Activated B cell treated with CpG ODN at 0.5 μM for 24 hours (primary cell): ENCODE measurements at regions of chr9 and their contacts with region 1.

Region 1: GRCh38 chr9:19102631-19103345 is at the start of gene HAUS6:
- DNase-seq: peak; percentile 86
- ATAC-seq: peak; percentile 94
- H3K4me3 Mint-ChIP-seq: peak within 1 kb of the TSS; percentile 98
- H3K27ac Mint-ChIP-seq: peak within 1 kb of the TSS; percentile 93
- H3K4me1 Mint-ChIP-seq: peaks cover 17% of the 10 kb centered on the region
- H3K27me3 Mint-ChIP-seq: no peaks in the 10 kb centered on the region
- CTCF ChIP-seq: no peak
- total RNA-seq, gene HAUS6: 13.7 and 15.3 TPM in 2 replicates

Region 2: DNA sequence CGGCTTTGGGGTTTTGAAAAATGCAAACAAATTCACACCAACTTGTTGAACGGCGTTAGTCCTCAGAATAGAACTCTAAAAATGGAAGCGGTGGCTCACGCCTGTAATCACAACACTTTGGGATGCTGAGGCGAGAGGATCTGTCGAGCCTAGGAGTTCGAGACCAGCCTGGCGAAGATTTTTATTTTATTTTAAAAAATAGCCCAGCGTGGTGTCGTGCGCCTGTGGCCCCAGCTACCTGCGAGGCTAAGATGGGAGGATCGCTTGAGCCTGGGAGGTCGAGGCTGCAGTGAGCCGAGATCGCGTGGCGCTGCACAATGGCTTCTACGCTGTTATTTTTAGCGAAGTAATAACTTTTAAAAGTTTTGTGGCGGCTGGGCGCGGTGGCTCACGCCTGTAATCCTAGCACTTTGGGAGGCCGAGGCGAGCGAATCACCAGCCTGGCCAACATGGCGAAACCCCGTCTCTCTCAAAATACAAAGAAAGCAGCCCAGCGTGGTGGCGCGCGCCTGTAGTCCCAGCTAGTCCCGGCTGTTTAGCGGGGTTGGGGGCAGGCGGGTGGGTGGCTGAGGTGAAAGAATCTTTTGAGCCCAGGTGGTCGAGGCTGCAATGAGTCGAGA is 25.2 kb after region 1 on chr9:
- CTCF ChIA-PET with region 1: no interaction called
- POLR2A ChIA-PET with region 1: interaction called, 8 read pairs
- intact Hi-C with region 1: loop called (anchors 1 kb)
- DNase-seq: peak; percentile 18
- ATAC-seq: peak; percentile 12
- H3K4me3 Mint-ChIP-seq: peak overlapping the region; percentile 89
- H3K27ac Mint-ChIP-seq: peak overlapping the region; percentile 79
- H3K4me1 Mint-ChIP-seq: peaks cover 29% of the 10 kb centered on the region
- H3K27me3 Mint-ChIP-seq: no peaks in the 10 kb centered on the region
- CTCF ChIP-seq: no peak

Region 3: GRCh38 chr9:19408693-19409400 is 306.1 kb after region 1 on chr9 and contains the start of gene ACER2:
- CTCF ChIA-PET with region 1: no interaction called
- POLR2A ChIA-PET with region 1: no interaction called
- intact Hi-C with region 1: loop called (anchors 2 kb)
- DNase-seq: peak; percentile 99
- ATAC-seq: peak; percentile 97
- H3K4me3 Mint-ChIP-seq: peak within 1 kb of the TSS; percentile 94
- H3K27ac Mint-ChIP-seq: peak within 1 kb of the TSS; percentile 69
- H3K4me1 Mint-ChIP-seq: peaks cover 12% of the 10 kb centered on the region
- H3K27me3 Mint-ChIP-seq: no peaks in the 10 kb centered on the region
- CTCF ChIP-seq: no peak
- total RNA-seq, gene ACER2: 1.4 and 2.0 TPM in 2 replicates

Region 4: DNA sequence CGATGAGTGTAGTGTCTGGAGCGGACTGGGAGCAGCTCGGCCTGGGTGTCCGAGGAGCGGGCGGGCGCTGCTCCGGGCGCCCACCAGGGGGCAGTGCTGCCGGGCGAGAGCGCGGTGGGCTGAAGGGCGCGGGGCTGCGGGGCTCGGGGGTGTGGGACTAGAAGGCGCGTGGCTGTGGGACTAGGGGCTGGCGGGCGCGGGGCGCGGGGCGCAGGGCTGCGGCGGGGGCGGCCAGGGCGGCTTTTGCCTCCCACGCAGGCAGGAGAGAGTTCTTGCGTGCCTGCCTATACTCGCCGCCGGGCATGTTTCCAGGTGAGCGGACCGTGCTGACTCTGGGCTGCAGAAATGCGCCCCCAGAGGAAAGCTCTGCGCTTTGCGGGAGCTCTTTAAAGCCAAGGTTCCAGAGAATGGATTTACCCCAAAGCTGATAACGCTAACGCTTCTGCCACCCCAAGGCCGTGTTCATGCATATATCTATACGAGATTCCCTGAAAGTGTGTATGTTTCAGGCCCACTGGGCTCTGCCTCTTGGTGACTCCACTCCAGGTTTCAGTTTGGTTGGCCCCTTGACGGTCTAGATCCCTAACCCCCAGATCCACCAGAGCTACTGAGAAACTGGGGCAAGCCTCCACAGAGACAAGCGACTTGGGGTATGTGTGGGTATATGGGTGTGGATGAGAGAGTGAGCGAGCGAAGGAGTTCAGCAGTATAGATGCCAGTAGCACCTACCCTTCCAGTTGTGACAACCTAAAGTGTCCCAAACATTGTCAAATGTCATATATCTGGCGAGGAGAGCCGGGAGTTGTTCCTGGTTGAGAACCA is 362.2 kb after region 1 on chr9:
- CTCF ChIA-PET with region 1: interaction called, 3 read pairs
- POLR2A ChIA-PET with region 1: interaction called, 5 read pairs
- intact Hi-C with region 1: loop called (anchors 2 kb)
- DNase-seq: peak; percentile 77
- ATAC-seq: peak; percentile 93
- H3K4me3 Mint-ChIP-seq: peak overlapping the region; percentile 88
- H3K27ac Mint-ChIP-seq: peak overlapping the region; percentile 69
- H3K4me1 Mint-ChIP-seq: peaks cover 11% of the 10 kb centered on the region
- H3K27me3 Mint-ChIP-seq: no peaks in the 10 kb centered on the region
- CTCF ChIP-seq: peak; percentile 60